ENCODE measurements at regions of chr12 and their contacts with region 1.

Region 1: GRCh38 chr12:123232807-123233543 is at the starts of genes MPHOSPH9 and MTRFR:
- DNase-seq: peak; percentile 94 to 100 (median 100)
- ATAC-seq: peak; percentile 97
- H3K4me3 ChIP-seq: peak within 1 kb of the TSS; percentile 97
- H3K4me3 Mint-ChIP-seq: peak within 1 kb of the TSS; percentile 93 to 100 (median 98)
- H3K27ac ChIP-seq: peak within 1 kb of the TSS; percentile 95
- H3K27ac Mint-ChIP-seq: peak within 1 kb of the TSS; percentile 96 to 99 (median 99)
- H3K4me1 ChIP-seq: peaks cover 31 to 41% of the 10 kb centered on the region in 2 donors
- H3K4me1 Mint-ChIP-seq: peaks cover 43 to 88% (median 65%) of the 10 kb centered on the region in 7 donors
- H3K27me3 ChIP-seq: no peaks in the 10 kb centered on the region
- H3K27me3 Mint-ChIP-seq: peaks cover 0 to 4% (median 0%) of the 10 kb centered on the region in 5 donors
- total RNA-seq, gene MPHOSPH9: 71.0 to 102 (median 82.4) TPM
- total RNA-seq, gene MTRFR: 26.8 to 56.9 (median 39.5) TPM

Region 2: GRCh38 chr12:122793685-122794106 is 439.3 kb before region 1 on chr12:
- CTCF ChIA-PET with region 1: no interaction called
- POLR2A ChIA-PET with region 1: no interaction called
- intact Hi-C with region 1: loop called in 1 of 2 experiments (anchors 1 kb)
- DNase-seq: peak in 7 of 9 donors; percentile 35 to 72 (median 62)
- ATAC-seq: peak; percentile 82
- H3K4me3 ChIP-seq: no peak overlapping the region
- H3K4me3 Mint-ChIP-seq: no peak overlapping the region
- H3K27ac ChIP-seq: no peak overlapping the region
- H3K27ac Mint-ChIP-seq: no peak overlapping the region
- H3K4me1 ChIP-seq: no peaks in the 10 kb centered on the region
- H3K4me1 Mint-ChIP-seq: peaks cover 0 to 3% (median 0%) of the 10 kb centered on the region in 7 donors
- H3K27me3 ChIP-seq: no peaks in the 10 kb centered on the region
- H3K27me3 Mint-ChIP-seq: no peaks in the 10 kb centered on the region

Region 3: DNA sequence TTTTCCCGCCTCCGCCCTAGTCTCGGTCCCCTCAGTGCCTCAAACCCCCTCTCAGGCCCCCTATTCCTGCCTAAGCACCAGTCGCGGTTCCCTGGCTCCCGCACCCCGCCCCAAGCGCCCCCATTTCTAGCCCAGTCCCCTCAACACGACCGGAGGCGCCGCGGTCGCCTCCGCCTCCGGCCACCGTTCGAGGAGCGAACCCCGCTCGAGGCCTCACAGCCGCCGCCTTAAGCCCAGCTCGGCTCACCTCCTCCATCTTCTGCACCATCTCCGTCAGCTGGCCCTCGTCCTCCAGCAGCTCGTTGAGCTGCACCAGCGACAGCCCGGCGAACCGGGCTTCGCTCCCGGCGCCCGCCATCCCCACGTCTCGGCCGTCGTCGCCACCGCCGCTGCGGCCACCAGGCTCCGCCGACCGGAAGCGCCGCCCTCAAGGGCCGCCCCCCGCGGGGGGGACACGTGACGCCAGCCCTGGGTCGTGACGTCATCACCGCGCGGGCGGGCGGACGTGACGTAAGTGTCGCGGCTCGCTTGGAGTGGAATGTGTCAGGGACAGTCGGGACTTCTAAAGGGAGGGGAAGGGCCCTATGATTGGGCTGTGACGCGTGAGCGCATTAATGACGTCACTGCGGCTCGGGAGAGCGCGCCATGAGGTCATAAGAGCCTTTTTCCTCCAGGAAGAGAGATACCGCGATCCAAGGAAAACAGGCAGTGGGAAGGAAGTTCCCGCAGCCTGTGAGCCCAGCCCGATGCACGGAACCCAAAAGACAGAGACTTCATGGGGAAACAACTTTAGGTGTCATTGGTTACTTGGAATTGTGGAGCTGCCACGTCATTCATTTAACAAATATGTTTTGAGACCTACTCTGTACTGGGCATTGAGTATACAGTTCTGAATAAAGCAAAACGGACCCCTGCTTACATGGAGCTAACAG is 337.0 kb before region 1 on chr12 and contains the start of gene VPS37B:
- CTCF ChIA-PET with region 1: interaction called, 3 read pairs
- POLR2A ChIA-PET with region 1: interaction called, 5 read pairs
- intact Hi-C with region 1: loop called (anchors 1 to 10 kb)
- DNase-seq: peak; percentile 91 to 97 (median 94)
- ATAC-seq: peak; percentile 85
- H3K4me3 ChIP-seq: peak within 1 kb of the TSS; percentile 82
- H3K4me3 Mint-ChIP-seq: peak within 1 kb of the TSS; percentile 86 to 99 (median 95)
- H3K27ac ChIP-seq: peak within 1 kb of the TSS; percentile 97
- H3K27ac Mint-ChIP-seq: peak within 1 kb of the TSS; percentile 72 to 100 (median 99)
- H3K4me1 ChIP-seq: peaks cover 59 to 75% of the 10 kb centered on the region in 2 donors
- H3K4me1 Mint-ChIP-seq: peaks cover 67 to 96% (median 87%) of the 10 kb centered on the region in 7 donors
- H3K27me3 ChIP-seq: no peaks in the 10 kb centered on the region
- H3K27me3 Mint-ChIP-seq: peaks cover 0 to 13% (median 0%) of the 10 kb centered on the region in 5 donors
- total RNA-seq, gene VPS37B: 25.3 to 101 (median 30.1) TPM

Region 4: DNA sequence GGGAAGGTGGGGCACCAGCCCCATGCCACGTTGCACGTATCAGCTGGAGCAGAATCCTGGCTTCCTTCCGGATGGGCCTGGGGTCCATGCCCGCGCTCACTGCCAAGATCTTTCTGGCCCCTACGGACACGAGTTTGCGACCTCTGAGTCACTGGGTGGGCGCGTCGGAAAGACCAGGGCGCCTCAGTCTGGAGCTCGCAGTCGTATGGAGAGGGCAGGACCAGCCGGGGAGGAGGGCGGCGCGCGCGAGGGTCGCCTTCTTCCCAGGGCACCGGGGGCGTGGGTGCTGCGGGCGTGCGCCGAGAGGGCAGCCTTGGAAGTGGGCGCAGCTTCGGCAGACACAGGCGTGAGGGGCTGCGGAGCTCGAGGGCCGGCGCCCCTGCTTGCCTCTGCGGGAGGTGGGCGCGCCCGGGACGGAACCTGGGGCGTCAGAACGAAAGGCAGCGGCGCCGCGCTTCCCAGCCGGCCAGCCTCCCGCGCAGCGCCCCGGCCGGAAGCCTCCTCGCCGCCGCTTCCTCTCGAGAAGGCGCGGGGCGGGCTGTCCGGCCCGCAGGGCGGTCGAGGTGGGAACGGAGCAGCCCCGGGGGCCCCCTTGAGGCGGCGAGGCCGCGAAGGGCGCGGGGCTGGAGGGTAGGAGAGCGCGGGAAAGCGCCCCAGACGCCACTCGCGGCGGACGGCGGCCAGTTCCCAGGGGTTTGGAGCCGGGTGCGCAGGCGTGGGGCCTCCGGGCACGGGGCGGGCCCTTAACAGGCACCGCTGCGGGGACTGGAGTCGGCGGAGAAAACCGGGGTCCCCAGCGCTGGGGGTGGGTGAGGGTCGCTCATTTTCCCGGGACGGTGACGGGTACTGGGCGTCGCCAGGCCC is 252.6 kb before region 1 on chr12 and contains the start of gene ARL6IP4:
- CTCF ChIA-PET with region 1: no interaction called
- POLR2A ChIA-PET with region 1: interaction called, 34 read pairs
- intact Hi-C with region 1: loop called (anchors 1 kb)
- DNase-seq: peak; percentile 46 to 72 (median 63)
- ATAC-seq: peak; percentile 81
- H3K4me3 ChIP-seq: peak within 1 kb of the TSS; percentile 84
- H3K4me3 Mint-ChIP-seq: peak within 1 kb of the TSS; percentile 86 to 95 (median 90)
- H3K27ac ChIP-seq: peak within 1 kb of the TSS; percentile 81
- H3K27ac Mint-ChIP-seq: peak within 1 kb of the TSS; percentile 81 to 92 (median 87)
- H3K4me1 ChIP-seq: peaks cover 41 to 46% of the 10 kb centered on the region in 2 donors
- H3K4me1 Mint-ChIP-seq: peaks cover 39 to 73% (median 53%) of the 10 kb centered on the region in 7 donors
- H3K27me3 ChIP-seq: no peaks in the 10 kb centered on the region
- H3K27me3 Mint-ChIP-seq: no peaks in the 10 kb centered on the region
- total RNA-seq, gene ARL6IP4: 137 to 189 (median 169) TPM

Region 5: GRCh38 chr12:123120452-123121166 is 112.4 kb before region 1 on chr12:
- CTCF ChIA-PET with region 1: interaction called, 4 read pairs
- POLR2A ChIA-PET with region 1: interaction called, 58 read pairs
- intact Hi-C with region 1: no loop called
- DNase-seq: peak in 7 of 9 donors; percentile 27 to 76 (median 67)
- ATAC-seq: peak; percentile 60
- H3K4me3 ChIP-seq: no peak overlapping the region
- H3K4me3 Mint-ChIP-seq: peak overlapping the region; percentile 66 to 83 (median 73)
- H3K27ac ChIP-seq: peak overlapping the region; percentile 71
- H3K27ac Mint-ChIP-seq: peak overlapping the region; percentile 91 to 100 (median 96)
- H3K4me1 ChIP-seq: peaks cover 3 to 68% of the 10 kb centered on the region in 2 donors
- H3K4me1 Mint-ChIP-seq: peaks cover 40 to 81% (median 75%) of the 10 kb centered on the region in 7 donors
- H3K27me3 ChIP-seq: no peaks in the 10 kb centered on the region
- H3K27me3 Mint-ChIP-seq: no peaks in the 10 kb centered on the region

Region 6: DNA sequence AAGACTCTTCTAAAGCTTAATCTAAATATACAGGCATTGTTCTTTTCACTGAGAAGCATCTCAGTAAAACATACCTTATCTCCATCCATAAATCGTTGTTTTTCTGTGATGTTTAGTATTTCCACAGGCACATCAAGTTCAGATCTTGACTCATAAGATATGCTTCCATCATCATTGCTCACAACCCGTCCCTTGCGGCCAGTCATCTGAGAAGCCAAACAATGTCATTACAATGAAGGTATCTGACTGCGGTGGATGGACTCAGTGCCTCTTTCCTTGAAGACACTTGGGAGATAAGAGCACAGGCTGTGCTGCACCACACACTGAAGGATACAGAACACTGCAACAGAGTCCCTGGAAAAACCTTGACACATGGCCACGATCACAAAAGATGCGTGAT is 86.9 kb after region 1 on chr12:
- CTCF ChIA-PET with region 1: no interaction called
- POLR2A ChIA-PET with region 1: no interaction called
- intact Hi-C with region 1: no loop called
- DNase-seq: no peak
- ATAC-seq: no peak
- H3K4me3 ChIP-seq: no peak overlapping the region
- H3K4me3 Mint-ChIP-seq: no peak overlapping the region
- H3K27ac ChIP-seq: no peak overlapping the region
- H3K27ac Mint-ChIP-seq: no peak overlapping the region
- H3K4me1 ChIP-seq: no peaks in the 10 kb centered on the region
- H3K4me1 Mint-ChIP-seq: no peaks in the 10 kb centered on the region
- H3K27me3 ChIP-seq: no peaks in the 10 kb centered on the region
- H3K27me3 Mint-ChIP-seq: no peaks in the 10 kb centered on the region

Region 7: GRCh38 chr12:123365025-123365917 is 132.3 kb after region 1 on chr12:
- CTCF ChIA-PET with region 1: no interaction called
- POLR2A ChIA-PET with region 1: interaction called, 17 read pairs
- intact Hi-C with region 1: loop called (anchors 1 kb)
- DNase-seq: peak; percentile 91 to 99 (median 98)
- ATAC-seq: peak; percentile 85
- H3K4me3 ChIP-seq: peak overlapping the region; percentile 97
- H3K4me3 Mint-ChIP-seq: peak overlapping the region; percentile 89 to 98 (median 95)
- H3K27ac ChIP-seq: peak overlapping the region; percentile 86
- H3K27ac Mint-ChIP-seq: peak overlapping the region; percentile 93 to 99 (median 95)
- H3K4me1 ChIP-seq: peaks cover 14 to 16% of the 10 kb centered on the region in 2 donors
- H3K4me1 Mint-ChIP-seq: peaks cover 11 to 29% (median 16%) of the 10 kb centered on the region in 7 donors
- H3K27me3 ChIP-seq: no peaks in the 10 kb centered on the region
- H3K27me3 Mint-ChIP-seq: no peaks in the 10 kb centered on the region

Region 8: DNA sequence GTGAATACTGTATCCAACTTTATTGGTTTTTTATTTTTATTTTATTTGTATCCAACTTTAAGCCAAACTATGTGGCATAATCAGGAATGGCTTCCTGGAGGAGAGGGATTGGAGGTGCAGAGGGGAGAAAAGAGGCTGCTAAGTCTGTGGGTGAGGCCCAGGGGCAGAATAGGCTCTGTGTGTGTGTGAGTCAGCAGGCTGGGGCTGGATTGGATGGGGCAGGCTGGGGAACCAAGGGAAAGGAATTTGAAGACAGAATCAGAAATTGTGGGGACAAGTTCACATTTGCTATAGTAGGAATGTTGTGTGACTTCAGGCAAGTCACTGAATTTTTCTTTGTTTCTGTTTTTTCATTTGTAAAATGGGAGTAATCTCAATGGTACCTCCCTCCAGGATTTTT is 313.3 kb after region 1 on chr12:
- CTCF ChIA-PET with region 1: no interaction called
- POLR2A ChIA-PET with region 1: no interaction called
- intact Hi-C with region 1: no loop called
- DNase-seq: no peak
- ATAC-seq: no peak
- H3K4me3 ChIP-seq: no peak overlapping the region
- H3K4me3 Mint-ChIP-seq: no peak overlapping the region
- H3K27ac ChIP-seq: no peak overlapping the region
- H3K27ac Mint-ChIP-seq: no peak overlapping the region
- H3K4me1 ChIP-seq: no peaks in the 10 kb centered on the region
- H3K4me1 Mint-ChIP-seq: peaks cover 0 to 1% (median 0%) of the 10 kb centered on the region in 7 donors
- H3K27me3 ChIP-seq: no peaks in the 10 kb centered on the region
- H3K27me3 Mint-ChIP-seq: peaks cover 0 to 25% (median 0%) of the 10 kb centered on the region in 5 donors

Measured in naive thymus-derived CD4-positive, alpha-beta T cell (primary cell).